CD4-positive, alpha-beta memory T cell (primary cell): ENCODE measurements at regions of chr20 and their contacts with region 1.

Region 1: GRCh38 chr20:18507218-18508021 is at the start of gene SEC23B:
- DNase-seq: peak; percentile 99 to 100 (median 99)
- H3K4me3 ChIP-seq: peak within 1 kb of the TSS; percentile 78 to 82
- H3K4me3 Mint-ChIP-seq: peak within 1 kb of the TSS; percentile 99 to 100 (median 100)
- H3K27ac ChIP-seq: peak within 1 kb of the TSS; percentile 87
- H3K27ac Mint-ChIP-seq: peak within 1 kb of the TSS; percentile 95 to 100 (median 100)
- H3K4me1 ChIP-seq: peaks cover 22% of the 10 kb centered on the region
- H3K4me1 Mint-ChIP-seq: peaks cover 24 to 48% (median 39%) of the 10 kb centered on the region in 4 donors
- H3K27me3 ChIP-seq: no peaks in the 10 kb centered on the region
- H3K27me3 Mint-ChIP-seq: peaks cover 0 to under 1% of the 10 kb centered on the region in 2 donors
- total RNA-seq, gene SEC23B: 46.8 to 50.0 TPM

Region 2: GRCh38 chr20:18412221-18412901 is 95.1 kb before region 1 on chr20:
- CTCF ChIA-PET with region 1: interaction called, 10 read pairs
- POLR2A ChIA-PET with region 1: interaction called, 3 read pairs
- intact Hi-C with region 1: no loop called
- DNase-seq: no peak
- H3K4me3 ChIP-seq: no peak overlapping the region
- H3K4me3 Mint-ChIP-seq: no peak overlapping the region
- H3K27ac ChIP-seq: no peak overlapping the region
- H3K27ac Mint-ChIP-seq: peak overlapping the region in 2 of 7 donors; percentile 7 to 43
- H3K4me1 ChIP-seq: no peaks in the 10 kb centered on the region
- H3K4me1 Mint-ChIP-seq: peaks cover 0 to 4% (median 2%) of the 10 kb centered on the region in 4 donors
- H3K27me3 ChIP-seq: no peaks in the 10 kb centered on the region
- H3K27me3 Mint-ChIP-seq: no peaks in the 10 kb centered on the region

Region 3: DNA sequence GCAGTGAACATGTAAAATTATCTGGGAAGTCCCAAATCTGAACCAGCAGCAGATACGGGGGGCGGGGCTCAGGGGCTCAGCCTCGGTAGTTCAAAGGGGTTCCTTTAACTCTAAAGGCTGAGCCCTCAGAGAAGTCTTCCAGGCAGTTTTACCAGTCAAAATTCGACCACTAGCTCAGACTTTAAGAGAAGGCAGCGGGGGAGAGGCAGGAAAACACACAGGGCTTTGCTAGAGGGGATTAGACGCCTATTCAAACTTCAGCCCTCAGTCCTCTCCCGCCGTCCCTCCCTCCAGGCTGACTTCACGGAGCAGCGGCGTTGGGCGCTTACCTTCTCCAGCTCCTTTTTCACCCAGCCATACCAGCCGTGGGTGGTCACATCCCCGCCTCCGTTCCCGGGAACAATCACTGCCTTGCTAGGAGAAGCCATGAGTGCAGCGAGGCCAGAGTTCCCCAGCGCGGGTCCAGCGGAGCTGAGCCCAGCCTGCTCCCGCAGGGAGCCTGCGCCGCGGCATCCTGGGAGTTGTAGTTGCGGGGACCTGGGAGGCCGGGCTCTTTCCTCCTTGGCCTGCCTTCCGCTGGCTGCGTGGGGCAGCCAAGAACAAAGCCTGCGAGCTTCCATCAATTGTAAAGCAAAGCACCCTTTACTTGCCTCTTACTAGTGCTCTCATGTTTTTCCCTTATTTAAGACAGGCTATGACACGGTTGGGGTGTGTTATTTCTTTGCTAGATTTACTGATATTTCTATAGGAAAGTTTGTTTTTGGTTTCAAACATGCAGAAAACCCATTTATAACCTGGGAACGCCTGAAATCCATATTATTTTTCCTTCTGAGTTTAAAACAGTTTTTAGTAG is 10.5 kb before region 1 on chr20 and contains the start of gene RBBP9:
- CTCF ChIA-PET with region 1: interaction called, 27 read pairs
- POLR2A ChIA-PET with region 1: interaction called, 153 read pairs
- intact Hi-C with region 1: loop called (anchors 1 kb)
- DNase-seq: peak; percentile 69 to 77 (median 72)
- H3K4me3 ChIP-seq: peak within 1 kb of the TSS; percentile 53 to 71
- H3K4me3 Mint-ChIP-seq: peak within 1 kb of the TSS; percentile 95 to 98 (median 97)
- H3K27ac ChIP-seq: peak within 1 kb of the TSS; percentile 69
- H3K27ac Mint-ChIP-seq: peak within 1 kb of the TSS; percentile 81 to 98 (median 96)
- H3K4me1 ChIP-seq: peaks cover 13% of the 10 kb centered on the region
- H3K4me1 Mint-ChIP-seq: peaks cover 9 to 21% (median 15%) of the 10 kb centered on the region in 4 donors
- H3K27me3 ChIP-seq: no peaks in the 10 kb centered on the region
- H3K27me3 Mint-ChIP-seq: peaks cover 2 to 3% of the 10 kb centered on the region in 2 donors
- total RNA-seq, gene RBBP9: 9.0 to 9.2 TPM

Region 4: GRCh38 chr20:18587665-18588573 is 80.5 kb after region 1 on chr20 and contains the start of gene DTD1:
- CTCF ChIA-PET with region 1: no interaction called
- POLR2A ChIA-PET with region 1: interaction called, 21 read pairs
- intact Hi-C with region 1: loop called (anchors 1 kb)
- DNase-seq: peak; percentile 66 to 77 (median 69)
- H3K4me3 ChIP-seq: peak within 1 kb of the TSS; percentile 47 to 80
- H3K4me3 Mint-ChIP-seq: peak within 1 kb of the TSS; percentile 87 to 95 (median 91)
- H3K27ac ChIP-seq: peak within 1 kb of the TSS; percentile 71
- H3K27ac Mint-ChIP-seq: peak within 1 kb of the TSS; percentile 88 to 97 (median 95)
- H3K4me1 ChIP-seq: peaks cover 27% of the 10 kb centered on the region
- H3K4me1 Mint-ChIP-seq: peaks cover 18 to 27% (median 23%) of the 10 kb centered on the region in 4 donors
- H3K27me3 ChIP-seq: no peaks in the 10 kb centered on the region
- H3K27me3 Mint-ChIP-seq: peaks cover 4 to 5% of the 10 kb centered on the region in 2 donors
- total RNA-seq, gene DTD1: 15.9 to 18.1 TPM